ENCODE measurements at regions of chr17 and their contacts with region 1.

Region 1: DNA sequence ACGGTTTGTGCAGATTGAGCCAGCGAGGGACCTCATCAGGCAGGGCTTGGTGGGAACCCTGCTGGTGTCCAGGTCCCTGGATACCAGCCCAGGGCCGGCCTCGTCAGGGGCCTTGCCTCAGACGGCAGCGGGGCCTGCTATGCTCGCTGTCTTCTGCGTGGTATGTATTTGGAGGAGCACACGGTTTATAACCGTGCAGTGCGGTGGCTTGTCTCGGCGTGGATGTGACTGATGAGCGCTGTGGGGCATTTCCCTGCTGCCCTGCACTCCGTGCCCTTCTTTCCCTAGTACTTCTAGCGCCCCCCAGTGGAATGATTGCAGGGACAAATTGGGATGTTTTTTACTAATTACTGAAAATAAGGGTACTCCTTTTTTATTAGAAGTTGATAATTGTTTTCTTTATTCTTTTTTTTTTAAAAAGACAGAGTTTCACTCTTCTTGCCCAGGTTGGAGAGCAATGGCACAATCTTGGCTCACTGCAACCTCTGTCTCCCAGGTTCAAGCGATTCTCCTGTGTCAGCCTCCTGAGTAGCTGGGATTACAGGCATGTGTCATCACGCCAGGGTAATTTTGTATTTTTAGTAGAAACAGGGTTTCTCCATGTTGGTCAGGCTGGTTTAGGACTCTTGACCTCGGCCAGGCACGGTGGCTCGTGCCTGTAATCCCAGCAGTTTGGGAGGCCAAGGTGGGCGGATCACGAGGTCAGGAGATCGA is 15.3 kb downstream of the TBCD start:
- H3K4me3 ChIP-seq: no peak overlapping the region
- H3K27ac ChIP-seq: no peak overlapping the region
- H3K4me1 ChIP-seq: no peaks in the 10 kb centered on the region
- CTCF ChIP-seq: 0 out of 2 replicates have a peak, but pooled peaks have one; percentile 44

Region 2: DNA sequence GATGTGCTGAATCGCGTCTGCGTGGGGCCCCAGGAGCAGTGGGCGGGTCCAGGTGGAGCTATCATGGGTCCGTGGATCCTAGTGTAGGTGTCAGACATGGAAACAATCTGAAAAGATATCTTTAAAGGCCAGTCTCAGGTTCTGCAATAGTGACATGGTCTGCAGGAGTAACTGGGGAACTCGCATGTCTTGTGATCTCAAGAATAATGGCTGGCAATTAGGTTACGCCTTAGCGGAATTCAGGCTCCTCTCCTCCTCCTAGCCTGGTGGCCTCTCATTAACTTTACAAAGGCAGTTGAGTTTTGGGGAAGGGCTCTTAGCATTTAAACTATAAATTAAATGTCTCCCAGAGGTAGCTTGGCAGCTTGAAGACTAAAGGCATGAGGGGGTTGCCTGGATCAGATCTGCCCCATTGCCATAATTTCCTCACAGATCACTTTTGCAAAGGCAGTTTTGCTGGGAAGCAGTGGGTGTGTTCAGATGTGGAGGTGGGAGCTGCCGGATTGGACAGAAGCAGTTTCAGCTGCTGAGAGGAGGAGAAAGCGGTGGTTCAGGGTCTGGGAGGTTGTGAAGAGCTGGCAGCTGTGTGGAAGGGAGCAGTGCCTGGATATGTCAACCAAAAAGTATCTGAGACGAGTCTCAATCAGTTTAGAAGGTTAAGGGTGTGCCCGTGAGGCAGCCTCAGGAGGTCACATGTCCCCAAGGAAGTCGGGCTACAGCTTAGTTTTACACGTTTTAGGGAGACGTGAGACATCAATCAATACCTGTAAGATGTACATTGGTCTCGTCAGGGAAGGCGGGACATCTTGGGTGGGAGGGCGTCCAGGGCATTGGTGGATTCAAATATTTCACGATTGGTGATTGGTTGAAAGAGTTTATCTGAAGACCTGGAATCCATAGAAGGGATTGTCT is 12.6 kb before region 1 on chr17:
- CTCF ChIA-PET with region 1: interaction called, 16 read pairs
- POLR2A ChIA-PET with region 1: no interaction called
- H3K4me3 ChIP-seq: no peak overlapping the region
- H3K27ac ChIP-seq: 0 out of 2 replicates have a peak overlapping the region, but pooled peaks have one; percentile 10
- H3K4me1 ChIP-seq: peaks cover 8% of the 10 kb centered on the region
- CTCF ChIP-seq: no peak

Region 3: GRCh38 chr17:82781894-82782274 is 14.7 kb after region 1 on chr17:
- CTCF ChIA-PET with region 1: interaction called, 16 read pairs
- POLR2A ChIA-PET with region 1: no interaction called
- H3K4me3 ChIP-seq: no peak overlapping the region
- H3K27ac ChIP-seq: peak overlapping the region; percentile 37; the same call in 1 of the 2 replicates
- H3K4me1 ChIP-seq: no peaks in the 10 kb centered on the region
- CTCF ChIP-seq: peak; percentile 86

Region 4: DNA sequence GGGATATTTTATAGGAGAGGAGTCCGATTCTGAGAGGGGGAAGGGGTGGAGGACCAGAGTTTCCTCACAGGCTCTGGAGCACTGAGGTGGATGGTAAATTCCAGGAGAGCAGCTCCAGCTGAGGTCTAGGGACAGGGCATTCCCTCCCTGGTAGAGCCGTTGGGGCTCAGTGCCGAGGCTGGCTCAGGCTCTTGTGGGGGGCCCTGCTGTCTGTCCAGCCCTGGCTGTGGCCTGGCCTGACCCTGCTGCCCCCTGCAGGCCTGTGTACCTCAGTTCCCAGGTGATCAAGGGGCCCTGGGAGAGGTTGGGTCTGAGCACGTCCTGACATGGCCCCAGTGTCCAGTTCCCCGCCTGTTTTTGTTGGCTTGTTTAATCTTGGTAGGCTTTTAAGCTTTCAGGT is 55.8 kb after region 1 on chr17:
- CTCF ChIA-PET with region 1: no interaction called
- POLR2A ChIA-PET with region 1: no interaction called
- H3K4me3 ChIP-seq: no peak overlapping the region
- H3K27ac ChIP-seq: no peak overlapping the region
- H3K4me1 ChIP-seq: no peaks in the 10 kb centered on the region
- CTCF ChIP-seq: no peak

Measured in HEK293 (cell line).